AG04449 (cell line): ENCODE measurements at regions of chr12 and their contacts with region 1.

Region 1: GRCh38 chr12:42023733-42024494 is 120.8 kb downstream of the GXYLT1 start:
- DNase-seq: no peak
- H3K4me3 ChIP-seq: peak overlapping the region; percentile 52
- CTCF ChIP-seq: peak; percentile 99

Region 2: GRCh38 chr12:40946612-40947194 is 1077.2 kb before region 1 on chr12:
- CTCF ChIA-PET with region 1: interaction called, 28 read pairs
- POLR2A ChIA-PET with region 1: no interaction called
- DNase-seq: peak; percentile 1
- H3K4me3 ChIP-seq: no peak overlapping the region
- CTCF ChIP-seq: peak; percentile 8

Region 3: DNA sequence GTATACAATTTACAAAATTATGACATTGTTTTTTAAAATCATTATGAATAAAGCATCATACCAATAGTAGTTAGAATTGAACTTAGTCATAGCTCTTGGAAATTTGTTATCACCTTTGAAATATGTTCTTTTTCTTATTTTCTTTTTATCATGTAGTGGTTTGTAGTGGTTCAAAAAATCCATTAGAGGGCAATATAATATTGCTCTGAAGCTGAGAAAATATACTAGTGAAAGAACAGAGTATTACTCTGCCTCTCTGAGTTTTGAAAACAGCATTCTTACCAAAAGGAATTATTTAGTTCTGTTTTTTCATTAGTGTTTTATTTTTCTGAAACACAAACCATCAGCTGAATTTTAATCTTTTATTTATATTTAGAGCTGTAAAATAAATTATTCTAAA is 759.6 kb before region 1 on chr12:
- CTCF ChIA-PET with region 1: interaction called, 25 read pairs
- POLR2A ChIA-PET with region 1: no interaction called
- DNase-seq: no peak
- H3K4me3 ChIP-seq: no peak overlapping the region
- CTCF ChIP-seq: no peak

Region 4: GRCh38 chr12:41277116-41277945 is 746.6 kb before region 1 on chr12:
- CTCF ChIA-PET with region 1: interaction called, 180 read pairs
- POLR2A ChIA-PET with region 1: no interaction called
- DNase-seq: peak; percentile 5
- H3K4me3 ChIP-seq: no peak overlapping the region
- CTCF ChIP-seq: peak; percentile 49

Region 5: GRCh38 chr12:42039176-42039575 is 15.3 kb after region 1 on chr12:
- CTCF ChIA-PET with region 1: interaction called, 15 read pairs
- POLR2A ChIA-PET with region 1: no interaction called
- DNase-seq: no peak
- H3K4me3 ChIP-seq: no peak overlapping the region
- CTCF ChIP-seq: no peak

Region 6: DNA sequence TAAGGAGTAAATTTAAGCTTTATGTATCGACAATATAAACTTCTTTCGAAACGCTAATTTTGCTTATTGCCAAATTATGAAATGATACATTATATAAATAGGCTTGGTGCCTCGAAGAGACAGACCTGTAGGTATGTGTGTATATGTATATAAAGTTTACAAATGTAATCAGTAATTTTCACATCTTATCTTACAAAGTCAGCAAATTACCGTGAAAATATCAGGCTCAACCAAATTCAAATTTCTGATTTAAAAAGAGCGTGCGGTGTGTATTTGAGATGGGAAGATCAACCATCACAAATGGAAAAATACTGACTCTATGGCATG is 301.4 kb after region 1 on chr12:
- CTCF ChIA-PET with region 1: no interaction called
- POLR2A ChIA-PET with region 1: no interaction called
- DNase-seq: no peak
- H3K4me3 ChIP-seq: peak overlapping the region; percentile 68
- CTCF ChIP-seq: no peak